Mammary epithelial cell (primary cell): ENCODE measurements at regions of chr6 and their contacts with region 1.

Region 1: DNA sequence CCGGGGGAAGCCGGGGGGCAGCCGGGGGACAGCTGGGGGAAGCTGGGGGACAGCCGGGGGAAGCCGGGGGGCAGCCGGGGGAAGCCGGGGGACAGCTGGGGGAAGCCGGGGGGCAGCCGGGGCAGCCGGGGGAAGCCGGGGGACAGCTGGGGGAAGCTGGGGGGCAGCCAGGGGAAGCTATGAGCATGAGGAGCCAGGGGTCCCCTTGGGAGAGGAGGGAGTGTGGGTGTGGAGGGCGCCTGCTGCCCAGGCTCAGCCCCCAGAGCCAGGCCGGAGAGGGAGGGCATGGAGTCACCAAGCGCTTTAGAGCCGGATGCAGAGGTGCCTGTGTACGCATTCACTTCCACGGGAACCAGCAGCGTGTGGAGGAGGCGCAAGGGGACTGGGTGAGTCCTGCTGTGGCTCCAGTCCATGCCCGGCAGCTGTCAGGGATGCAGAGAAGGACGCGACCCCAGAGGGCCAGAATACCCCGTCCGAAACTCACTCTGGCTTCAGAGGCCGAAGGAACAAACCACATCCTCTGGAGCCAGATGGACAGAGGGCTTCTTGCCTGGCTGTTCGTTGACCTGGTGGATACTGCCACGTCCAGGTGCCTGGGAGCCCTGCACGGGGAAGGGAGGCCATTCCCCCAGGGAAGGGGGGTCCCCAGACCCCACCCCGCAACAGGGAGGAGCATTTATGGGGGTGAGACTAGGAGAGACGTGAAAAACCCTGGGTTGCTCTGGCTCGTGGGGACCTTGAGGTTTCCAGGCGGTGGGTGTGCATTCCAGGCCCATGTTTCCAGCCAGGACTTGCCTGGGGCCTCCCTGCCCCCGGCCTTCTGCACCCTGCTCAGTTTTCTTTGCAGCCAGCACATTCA is 26.5 kb upstream of the DACT2 start:
- DNase-seq: no peak
- H3K4me3 ChIP-seq: no peak overlapping the region
- H3K27ac ChIP-seq: no peak overlapping the region
- H3K4me1 ChIP-seq: no peaks in the 10 kb centered on the region
- H3K27me3 ChIP-seq: no peaks in the 10 kb centered on the region
- CTCF ChIP-seq: no peak

Region 2: DNA sequence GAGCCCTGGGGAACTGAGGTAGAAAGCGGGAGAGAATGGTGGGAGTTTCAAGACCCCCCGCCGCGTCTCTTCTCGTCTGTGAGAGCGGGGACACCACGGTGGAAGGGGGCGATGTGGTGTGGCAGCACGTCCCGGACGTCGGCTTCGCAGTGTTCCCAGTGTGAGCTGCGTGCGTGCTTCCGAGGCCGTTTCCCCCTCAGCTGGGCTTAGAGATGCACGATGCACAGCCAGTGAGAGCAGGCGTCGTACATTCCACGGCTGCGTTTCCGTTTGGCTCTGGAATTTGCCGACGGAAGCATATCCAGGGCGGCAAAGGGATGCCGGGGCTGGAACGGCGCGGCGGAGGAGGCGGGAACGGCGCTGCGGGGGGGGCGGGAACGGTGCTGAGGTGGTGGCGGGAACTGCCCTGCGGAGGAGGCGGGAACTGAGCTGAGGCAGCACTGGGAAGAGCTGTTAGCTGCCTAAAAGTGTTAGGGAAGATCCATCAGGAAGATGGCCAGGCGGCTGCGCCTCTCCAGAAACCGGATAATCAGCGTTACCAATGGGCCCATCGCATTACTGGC is 310.9 kb before region 1 on chr6:
- CTCF ChIA-PET with region 1: no interaction called
- dilution Hi-C with region 1: no loop called
- in situ Hi-C with region 1: no loop called
- intact Hi-C with region 1: no loop called
- DNase-seq: no peak
- H3K4me3 ChIP-seq: peak overlapping the region; percentile 21 to 46 (median 31)
- H3K27ac ChIP-seq: no peak overlapping the region
- H3K4me1 ChIP-seq: peaks cover 18% of the 10 kb centered on the region
- H3K27me3 ChIP-seq: no peaks in the 10 kb centered on the region
- CTCF ChIP-seq: no peak

Region 3: GRCh38 chr6:168179133-168179532 is 167.0 kb before region 1 on chr6:
- CTCF ChIA-PET with region 1: no interaction called
- dilution Hi-C with region 1: no loop called
- in situ Hi-C with region 1: no loop called
- intact Hi-C with region 1: no loop called
- DNase-seq: no peak
- H3K4me3 ChIP-seq: no peak overlapping the region
- H3K27ac ChIP-seq: no peak overlapping the region
- H3K4me1 ChIP-seq: no peaks in the 10 kb centered on the region
- H3K27me3 ChIP-seq: no peaks in the 10 kb centered on the region
- CTCF ChIP-seq: no peak

Region 4: DNA sequence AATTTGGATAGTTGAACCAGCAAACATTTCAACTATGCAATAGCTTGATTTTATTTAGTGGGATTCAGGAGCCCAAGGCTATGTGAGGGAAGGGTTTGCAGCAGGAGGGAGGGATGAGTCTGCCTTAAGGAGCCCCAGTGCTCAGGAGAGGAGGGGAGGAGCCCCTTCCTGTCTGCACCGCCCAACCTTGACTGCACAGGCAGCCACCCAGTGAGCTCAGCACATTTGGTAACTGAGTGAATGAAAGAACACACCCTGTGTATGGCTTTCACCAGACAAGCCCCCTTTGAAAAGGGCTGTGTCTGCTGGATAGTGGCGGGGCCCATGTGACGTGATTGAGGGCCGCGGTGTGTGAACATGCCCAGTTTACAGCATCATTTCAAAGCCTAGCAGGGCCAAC is 43.6 kb before region 1 on chr6:
- CTCF ChIA-PET with region 1: no interaction called
- dilution Hi-C with region 1: loop called (anchors 5 kb)
- in situ Hi-C with region 1: no loop called
- intact Hi-C with region 1: no loop called
- DNase-seq: no peak
- H3K4me3 ChIP-seq: no peak overlapping the region
- H3K27ac ChIP-seq: no peak overlapping the region
- H3K4me1 ChIP-seq: no peaks in the 10 kb centered on the region
- H3K27me3 ChIP-seq: no peaks in the 10 kb centered on the region
- CTCF ChIP-seq: no peak

Region 5: DNA sequence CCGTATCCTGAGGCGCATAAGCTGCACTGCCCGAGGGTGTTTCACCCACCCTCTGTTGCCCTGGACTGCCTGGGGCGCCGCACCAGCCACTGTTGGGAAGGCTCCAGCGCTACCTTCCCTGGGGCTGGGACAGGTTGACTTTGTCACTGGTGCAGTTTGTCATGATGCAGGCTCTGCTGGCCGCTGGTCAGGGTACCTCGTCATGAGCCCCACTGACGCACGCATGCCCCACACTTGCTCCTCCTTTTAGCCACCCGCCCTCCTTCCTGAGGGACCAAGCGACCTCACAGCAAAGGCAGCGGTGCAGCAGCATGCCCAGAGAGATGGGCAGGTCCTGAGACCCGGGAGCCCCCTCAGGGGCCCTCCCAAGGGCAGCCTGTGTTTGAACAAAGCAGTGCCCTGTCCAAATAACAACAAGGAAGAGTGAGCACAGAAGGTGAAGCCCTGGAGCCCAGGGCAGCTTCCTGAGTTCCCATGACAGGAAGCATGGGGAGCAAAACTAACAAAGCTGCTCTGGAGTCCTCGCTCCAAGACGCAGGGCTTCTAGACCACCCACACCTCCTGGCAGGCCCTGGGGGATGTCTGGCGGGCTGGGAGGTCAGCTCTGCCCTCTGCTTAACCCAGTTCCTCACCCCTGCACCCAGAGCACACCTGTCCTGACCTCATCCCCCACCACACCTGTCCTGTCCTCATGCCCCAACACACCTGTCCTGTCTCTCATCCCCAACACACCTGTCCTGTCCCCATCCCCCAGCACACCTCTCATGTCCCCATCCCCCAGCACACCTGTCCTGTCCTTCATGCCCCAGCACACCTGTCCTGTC is 44.8 kb after region 1 on chr6:
- CTCF ChIA-PET with region 1: no interaction called
- dilution Hi-C with region 1: loop called (anchors 5 kb)
- in situ Hi-C with region 1: no loop called
- intact Hi-C with region 1: no loop called
- DNase-seq: no peak
- H3K4me3 ChIP-seq: no peak overlapping the region
- H3K27ac ChIP-seq: no peak overlapping the region
- H3K4me1 ChIP-seq: no peaks in the 10 kb centered on the region
- H3K27me3 ChIP-seq: no peaks in the 10 kb centered on the region
- CTCF ChIP-seq: no peak